PC-3 (cell line): ENCODE measurements at regions of chr7 and their contacts with region 1.

Region 1: DNA sequence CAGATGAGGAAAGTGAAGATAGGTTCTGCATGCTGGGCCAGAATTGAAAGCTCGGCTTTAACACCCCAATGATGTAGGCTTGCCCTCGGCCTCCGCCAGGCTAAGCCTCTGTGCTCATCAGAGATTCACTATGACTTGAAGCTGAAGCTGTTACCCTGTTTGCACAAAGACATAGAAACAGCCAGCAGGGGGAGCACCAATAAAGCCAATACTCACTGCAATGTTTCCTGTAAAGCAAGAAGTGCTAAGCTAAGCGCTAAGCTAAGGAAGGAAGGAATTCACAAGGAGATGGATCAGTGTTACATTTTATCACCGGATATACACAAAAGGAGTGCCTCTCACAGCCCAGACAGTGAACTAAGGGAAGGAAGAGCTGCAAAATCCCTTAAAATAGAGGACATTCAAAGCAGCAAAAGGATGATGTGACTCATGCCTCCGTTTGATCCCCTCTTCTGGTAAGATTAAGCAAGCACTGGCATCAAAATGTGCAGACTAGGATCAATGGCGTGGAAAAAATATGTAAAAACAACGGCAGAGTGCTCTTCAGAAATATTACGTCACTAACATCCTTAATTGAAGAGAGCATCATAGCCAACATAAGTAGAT is 153.8 kb downstream of the COBL start:
- DNase-seq: peak; percentile 90
- ATAC-seq: peak; percentile 96
- H3K4me3 ChIP-seq: no peak overlapping the region
- H3K27ac ChIP-seq: no peak overlapping the region
- H3K4me1 ChIP-seq: no peaks in the 10 kb centered on the region; the same call in 1 of the 2 replicates
- H3K27me3 ChIP-seq: no peaks in the 10 kb centered on the region
- CTCF ChIP-seq: peak; percentile 94

Region 2: DNA sequence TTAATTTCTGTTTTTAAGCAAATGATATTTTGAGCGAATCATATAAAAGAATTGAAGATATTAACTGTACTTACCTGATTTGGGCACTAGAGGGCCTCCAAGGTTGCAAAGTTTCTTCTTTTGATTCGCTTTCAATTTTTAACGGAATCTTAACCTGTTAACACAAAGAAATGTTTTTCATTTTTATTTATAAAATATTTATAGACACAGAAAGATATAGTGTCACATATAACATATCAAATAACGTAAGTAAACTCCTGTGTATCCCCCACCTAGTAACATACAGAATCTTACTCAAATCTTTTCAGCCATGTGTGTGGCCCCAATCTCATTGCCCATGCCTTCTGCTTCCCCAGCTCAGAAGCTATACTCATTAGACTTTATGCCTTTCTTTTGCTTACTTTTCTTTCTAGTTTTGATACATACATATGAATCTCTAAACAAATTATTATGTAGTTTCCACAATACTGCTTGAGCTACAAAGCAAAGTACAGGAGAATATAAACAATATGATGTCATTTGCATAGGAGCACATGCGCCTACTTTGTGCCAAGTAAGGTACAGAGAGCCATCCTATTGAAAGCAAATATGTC is 1020.3 kb before region 1 on chr7:
- CTCF ChIA-PET with region 1: interaction called, 3 read pairs
- POLR2A ChIA-PET with region 1: no interaction called
- intact Hi-C with region 1: loop called (anchors 1 kb)
- DNase-seq: peak; percentile 59
- ATAC-seq: no peak
- H3K4me3 ChIP-seq: no peak overlapping the region
- H3K27ac ChIP-seq: no peak overlapping the region
- H3K4me1 ChIP-seq: no peaks in the 10 kb centered on the region
- H3K27me3 ChIP-seq: peaks cover 16% of the 10 kb centered on the region
- CTCF ChIP-seq: peak; percentile 63

Region 3: DNA sequence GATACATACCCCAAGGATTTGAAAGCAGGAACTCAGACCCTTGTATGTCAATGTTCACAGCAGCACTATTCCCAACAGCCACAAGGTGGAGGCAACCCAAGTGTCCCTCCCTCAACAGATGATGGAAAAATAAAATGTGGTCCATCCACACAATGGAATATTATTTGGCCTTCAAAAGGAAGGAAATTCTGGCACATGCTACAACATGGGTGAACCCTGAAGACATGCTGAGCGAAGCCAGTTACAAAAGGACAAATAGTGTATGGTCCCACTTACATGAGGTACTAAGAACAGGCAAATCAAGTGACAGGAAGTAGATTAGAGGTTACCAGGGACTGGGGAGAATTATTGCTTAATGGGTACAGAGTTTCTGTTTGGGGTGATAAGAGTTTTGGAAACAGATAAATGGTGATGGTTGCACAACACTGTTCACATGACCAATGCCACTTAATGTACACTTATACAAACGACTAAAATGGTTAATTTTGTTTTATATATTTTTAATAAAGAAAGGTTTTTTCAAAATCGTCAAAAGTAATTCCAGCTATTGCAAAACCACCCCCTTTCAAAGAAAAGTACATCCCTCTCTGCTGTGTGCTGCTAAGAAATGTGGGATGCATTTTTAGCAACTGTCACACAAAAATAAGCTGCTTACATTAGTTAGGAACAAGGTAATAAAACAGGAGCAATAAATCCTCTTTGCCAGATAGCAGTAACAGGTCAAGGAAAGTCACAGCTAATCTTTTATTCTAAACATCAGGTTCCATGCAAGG is 465.8 kb before region 1 on chr7:
- CTCF ChIA-PET with region 1: no interaction called
- POLR2A ChIA-PET with region 1: no interaction called
- intact Hi-C with region 1: loop called (anchors 2 kb)
- DNase-seq: peak; percentile 46
- ATAC-seq: peak; percentile 53; the same call in 1 of the 2 replicates
- H3K4me3 ChIP-seq: no peak overlapping the region
- H3K27ac ChIP-seq: no peak overlapping the region
- H3K4me1 ChIP-seq: no peaks in the 10 kb centered on the region
- H3K27me3 ChIP-seq: no peaks in the 10 kb centered on the region
- CTCF ChIP-seq: peak; percentile 73

Region 4: DNA sequence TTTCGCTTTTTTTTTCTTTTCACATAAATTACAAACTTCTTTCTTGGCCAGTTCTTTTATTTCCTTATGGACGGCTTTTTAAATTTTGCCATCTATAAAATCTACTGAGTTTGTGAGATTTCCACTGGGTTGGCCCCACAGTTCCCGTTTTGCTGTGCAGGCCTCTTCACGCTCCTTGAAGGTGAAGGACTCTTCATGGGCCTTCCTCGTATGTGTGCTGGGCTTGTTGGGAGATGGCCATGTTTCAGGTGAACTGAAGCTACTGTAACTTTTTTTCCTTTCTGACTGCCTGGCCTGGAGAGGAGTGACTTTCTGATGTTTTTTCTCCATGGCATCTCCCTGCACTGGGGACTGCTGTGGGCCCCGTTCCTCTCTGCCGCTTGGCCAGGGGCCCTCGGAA is 108.6 kb before region 1 on chr7:
- CTCF ChIA-PET with region 1: no interaction called
- POLR2A ChIA-PET with region 1: no interaction called
- intact Hi-C with region 1: no loop called
- DNase-seq: no peak
- ATAC-seq: no peak
- H3K4me3 ChIP-seq: no peak overlapping the region
- H3K27ac ChIP-seq: no peak overlapping the region
- H3K4me1 ChIP-seq: no peaks in the 10 kb centered on the region
- H3K27me3 ChIP-seq: no peaks in the 10 kb centered on the region
- CTCF ChIP-seq: no peak

Region 5: GRCh38 chr7:51224811-51225612 is 62.2 kb after region 1 on chr7:
- CTCF ChIA-PET with region 1: interaction called, 20 read pairs
- POLR2A ChIA-PET with region 1: no interaction called
- intact Hi-C with region 1: loop called (anchors 2 kb)
- DNase-seq: peak; percentile 86
- ATAC-seq: peak; percentile 78
- H3K4me3 ChIP-seq: no peak overlapping the region
- H3K27ac ChIP-seq: peak overlapping the region; percentile 79
- H3K4me1 ChIP-seq: peaks cover 25% of the 10 kb centered on the region
- H3K27me3 ChIP-seq: no peaks in the 10 kb centered on the region
- CTCF ChIP-seq: peak; percentile 80

Region 6: DNA sequence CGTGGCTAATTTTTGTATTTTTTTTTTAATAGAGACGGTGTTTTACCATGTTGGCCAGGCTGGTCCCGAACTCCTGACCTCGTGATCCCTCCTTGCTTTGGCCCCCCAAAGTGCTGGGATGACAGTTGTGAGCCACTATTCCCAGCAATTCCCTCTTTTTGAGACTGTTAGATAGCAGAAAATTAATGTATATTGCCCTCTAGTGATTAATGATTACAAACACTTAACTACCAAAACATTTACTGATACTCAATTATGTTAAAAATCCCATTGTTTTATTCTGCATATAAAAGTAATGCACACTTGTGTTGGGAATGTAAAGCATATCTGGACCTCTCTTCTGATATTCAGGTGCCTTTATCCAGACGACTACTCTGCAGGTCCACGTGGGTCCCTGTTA is 195.0 kb after region 1 on chr7:
- CTCF ChIA-PET with region 1: interaction called, 10 read pairs
- POLR2A ChIA-PET with region 1: no interaction called
- intact Hi-C with region 1: loop called (anchors 1 kb)
- DNase-seq: no peak
- ATAC-seq: peak; percentile 64
- H3K4me3 ChIP-seq: no peak overlapping the region
- H3K27ac ChIP-seq: no peak overlapping the region
- H3K4me1 ChIP-seq: no peaks in the 10 kb centered on the region
- H3K27me3 ChIP-seq: no peaks in the 10 kb centered on the region
- CTCF ChIP-seq: peak; percentile 53; the same call in 1 of the 2 replicates

Region 7: GRCh38 chr7:51430480-51431086 is 267.8 kb after region 1 on chr7:
- CTCF ChIA-PET with region 1: interaction called, 10 read pairs
- POLR2A ChIA-PET with region 1: no interaction called
- intact Hi-C with region 1: loop called (anchors 1 kb)
- DNase-seq: peak; percentile 76
- ATAC-seq: peak; percentile 46; the same call in 1 of the 2 replicates
- H3K4me3 ChIP-seq: no peak overlapping the region
- H3K27ac ChIP-seq: no peak overlapping the region
- H3K4me1 ChIP-seq: no peaks in the 10 kb centered on the region
- H3K27me3 ChIP-seq: peaks cover 23% of the 10 kb centered on the region
- CTCF ChIP-seq: peak; percentile 83